ENCODE measurements at regions of chr4 and their contacts with region 1.

Region 1: GRCh38 chr4:1249148-1249730 is 309 bp upstream of the CTBP1 start:
- DNase-seq: no peak
- ATAC-seq: peak; percentile 57
- H3K4me3 ChIP-seq: peak overlapping the region; percentile 83
- H3K27ac ChIP-seq: peak overlapping the region; percentile 92
- H3K4me1 ChIP-seq: peaks cover 24% of the 10 kb centered on the region
- H3K27me3 ChIP-seq: no peaks in the 10 kb centered on the region
- CTCF ChIP-seq: no peak
- EP300 ChIP-seq: no peak
- POLR2A ChIP-seq: no peak
- RAD21 ChIP-seq: no peak

Region 2: DNA sequence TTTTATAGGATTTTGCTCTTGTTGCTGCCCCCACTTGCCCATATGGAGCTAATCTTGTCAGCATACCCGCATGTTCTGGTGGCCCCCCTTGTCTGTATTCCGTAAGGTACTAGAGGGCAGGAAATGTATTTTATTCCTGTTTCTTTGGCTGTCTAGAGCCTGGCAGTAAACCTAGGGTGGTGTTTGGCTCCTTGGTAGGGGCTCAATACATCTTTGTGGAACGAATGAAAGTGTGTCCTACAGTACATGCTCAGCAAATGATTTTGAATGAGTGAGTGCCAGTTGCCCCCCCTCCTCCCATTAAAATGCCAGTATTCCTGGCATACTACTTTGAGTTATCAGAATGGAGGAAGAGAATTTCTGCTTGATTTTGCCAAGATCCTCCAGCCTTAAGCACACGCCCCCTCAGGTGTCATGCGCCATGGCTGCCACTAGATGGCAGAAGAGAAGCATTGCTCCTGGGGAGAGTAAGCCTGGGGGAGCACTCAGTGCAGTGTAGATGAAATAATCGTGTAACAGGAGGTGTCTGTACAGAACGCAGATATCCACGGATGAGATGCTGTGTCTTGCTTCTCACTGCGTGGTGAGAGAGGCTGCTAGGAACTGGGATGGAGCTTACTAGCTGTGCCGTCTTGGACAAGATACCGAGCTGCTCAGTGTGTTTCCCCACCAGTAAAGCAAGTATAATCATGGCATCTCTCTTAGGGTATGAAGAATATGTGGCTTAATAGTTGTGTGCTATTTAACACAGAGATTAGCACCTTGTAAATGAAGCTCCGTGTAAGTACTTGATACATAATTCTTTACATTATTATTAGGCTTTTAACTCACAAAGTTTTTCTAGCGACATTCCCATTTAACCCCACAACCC is 118.7 kb before region 1 on chr4:
- CTCF ChIA-PET with region 1: interaction called, 9 read pairs
- POLR2A ChIA-PET with region 1: no interaction called
- RAD21 ChIA-PET with region 1: interaction called, 7 read pairs
- SMC1A ChIA-PET with region 1: interaction called, 4 read pairs
- in situ Hi-C with region 1: no loop called
- intact Hi-C with region 1: loop called (anchors 5 kb)
- DNase-seq: peak; percentile 57
- ATAC-seq: peak; percentile 100
- H3K4me3 ChIP-seq: no peak overlapping the region
- H3K27ac ChIP-seq: no peak overlapping the region
- H3K4me1 ChIP-seq: no peaks in the 10 kb centered on the region; the same call in 1 of the 2 replicates
- H3K27me3 ChIP-seq: no peaks in the 10 kb centered on the region
- CTCF ChIP-seq: peak; percentile 99 to 100 (median 99); a peak in 5 of 6 replicates
- EP300 ChIP-seq: no peak
- POLR2A ChIP-seq: no peak
- RAD21 ChIP-seq: peak; percentile 100

Region 3: DNA sequence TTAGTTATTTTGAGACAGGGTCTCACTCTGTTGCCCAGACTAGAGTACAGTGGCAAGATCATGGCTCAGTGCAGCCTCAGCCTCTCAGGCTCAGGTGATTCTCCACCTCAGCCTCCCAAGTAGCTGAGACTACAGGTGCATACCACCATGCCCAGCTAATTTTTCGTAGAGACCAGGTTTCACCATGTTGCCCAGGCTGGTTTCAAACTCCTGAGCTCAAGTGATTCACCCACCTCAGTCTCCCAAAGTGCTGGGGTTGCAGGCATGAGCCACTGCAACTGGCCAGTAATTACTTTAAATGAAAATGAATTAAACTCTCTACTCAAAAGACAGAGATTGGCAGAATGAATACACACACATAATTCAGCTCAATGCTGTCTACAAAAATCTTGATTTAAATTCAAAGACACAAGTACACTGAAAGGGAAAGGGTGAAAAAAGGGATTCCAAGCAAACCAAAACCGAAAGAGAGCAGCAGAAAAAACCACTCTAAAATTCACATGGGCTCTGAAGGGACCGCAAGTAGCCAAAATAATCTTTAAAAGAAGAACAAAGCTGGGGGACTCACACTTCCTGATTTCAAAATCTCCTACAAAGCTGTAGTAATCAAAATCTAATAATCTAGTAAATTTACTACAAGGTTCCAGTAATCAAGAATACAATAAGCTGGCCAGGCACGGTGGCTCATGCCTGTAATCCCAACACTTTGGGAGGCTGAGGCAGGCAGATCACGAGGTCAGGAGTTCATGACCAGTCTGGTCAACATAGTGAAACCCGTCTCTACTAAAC is 65.1 kb before region 1 on chr4:
- CTCF ChIA-PET with region 1: no interaction called
- POLR2A ChIA-PET with region 1: no interaction called
- RAD21 ChIA-PET with region 1: interaction called, 3 read pairs
- SMC1A ChIA-PET with region 1: no interaction called
- in situ Hi-C with region 1: no loop called
- intact Hi-C with region 1: loop called (anchors 5 kb)
- DNase-seq: peak; percentile 64
- ATAC-seq: peak; percentile 82
- H3K4me3 ChIP-seq: peak overlapping the region; percentile 60
- H3K27ac ChIP-seq: peak overlapping the region; percentile 57
- H3K4me1 ChIP-seq: peaks cover 27% of the 10 kb centered on the region
- H3K27me3 ChIP-seq: no peaks in the 10 kb centered on the region
- CTCF ChIP-seq: no peak
- EP300 ChIP-seq: 0 out of 4 replicates have a peak, but pooled peaks of 1 of the 2 experiments have one; percentile 39
- POLR2A ChIP-seq: no peak
- RAD21 ChIP-seq: no peak

Region 4: GRCh38 chr4:1200425-1201035 is 48.7 kb before region 1 on chr4:
- CTCF ChIA-PET with region 1: no interaction called
- POLR2A ChIA-PET with region 1: interaction called, 4 read pairs
- RAD21 ChIA-PET with region 1: interaction called, 16 read pairs
- SMC1A ChIA-PET with region 1: interaction called, 8 read pairs
- in situ Hi-C with region 1: no loop called
- intact Hi-C with region 1: loop called (anchors 5 kb)
- DNase-seq: no peak
- ATAC-seq: peak; percentile 41
- H3K4me3 ChIP-seq: peak overlapping the region; percentile 75
- H3K27ac ChIP-seq: peak overlapping the region; percentile 77
- H3K4me1 ChIP-seq: peaks cover 38% of the 10 kb centered on the region
- H3K27me3 ChIP-seq: no peaks in the 10 kb centered on the region
- CTCF ChIP-seq: no peak
- EP300 ChIP-seq: no peak
- POLR2A ChIP-seq: no peak
- RAD21 ChIP-seq: no peak

Region 5: DNA sequence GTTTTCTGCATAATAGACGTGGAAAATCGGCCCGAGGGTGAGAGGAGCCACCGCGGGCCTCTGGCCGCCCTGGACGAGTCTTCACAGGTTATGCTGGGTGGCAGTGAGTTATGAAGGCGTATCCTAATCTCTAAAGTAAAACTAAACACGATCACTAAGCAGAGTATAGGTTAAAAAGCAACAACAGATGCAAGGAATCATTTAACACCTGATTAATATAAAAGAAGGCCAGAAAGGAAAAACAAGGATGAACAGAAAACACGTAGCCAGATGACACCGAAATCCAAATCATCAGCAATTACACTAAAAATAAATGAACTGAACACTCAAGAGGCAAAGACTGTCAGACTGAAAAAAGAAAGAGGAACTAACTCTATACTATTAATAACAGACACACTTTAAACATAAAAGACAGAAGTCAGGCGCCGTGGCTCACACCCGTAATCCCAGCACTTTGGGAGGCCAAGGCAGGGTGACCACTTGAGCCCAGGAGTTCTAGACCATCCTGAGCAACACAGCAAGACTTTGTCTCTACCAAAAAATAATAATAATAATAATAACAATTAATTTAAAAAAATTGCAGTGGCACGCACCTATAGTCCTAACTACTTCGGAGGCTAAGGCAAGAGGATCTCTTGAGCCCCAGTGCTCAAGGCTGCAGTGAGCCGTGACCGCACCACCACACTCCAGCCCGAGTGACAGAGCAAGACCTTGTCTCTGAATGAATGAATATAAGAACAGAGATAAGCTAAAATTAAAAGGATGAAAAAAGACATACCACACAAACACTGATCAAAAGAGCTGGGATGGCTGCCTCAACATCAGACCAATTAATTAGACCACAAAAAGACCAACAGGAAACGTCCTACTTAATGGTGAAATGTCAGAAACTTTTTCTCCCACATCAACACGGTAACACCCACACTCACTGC is 30.3 kb before region 1 on chr4:
- CTCF ChIA-PET with region 1: no interaction called
- POLR2A ChIA-PET with region 1: interaction called, 5 read pairs
- RAD21 ChIA-PET with region 1: interaction called, 8 read pairs
- SMC1A ChIA-PET with region 1: interaction called, 5 read pairs
- in situ Hi-C with region 1: no loop called
- intact Hi-C with region 1: loop called (anchors 1 kb)
- DNase-seq: peak; percentile 92
- ATAC-seq: peak; percentile 91
- H3K4me3 ChIP-seq: peak overlapping the region; percentile 45; the same call in 1 of the 2 replicates
- H3K27ac ChIP-seq: peak overlapping the region; percentile 88
- H3K4me1 ChIP-seq: peaks cover 51% of the 10 kb centered on the region
- H3K27me3 ChIP-seq: no peaks in the 10 kb centered on the region
- CTCF ChIP-seq: no peak
- EP300 ChIP-seq: peak; percentile 87 to 88; a peak in 3 of 4 replicates
- POLR2A ChIP-seq: no peak
- RAD21 ChIP-seq: no peak

Region 6: DNA sequence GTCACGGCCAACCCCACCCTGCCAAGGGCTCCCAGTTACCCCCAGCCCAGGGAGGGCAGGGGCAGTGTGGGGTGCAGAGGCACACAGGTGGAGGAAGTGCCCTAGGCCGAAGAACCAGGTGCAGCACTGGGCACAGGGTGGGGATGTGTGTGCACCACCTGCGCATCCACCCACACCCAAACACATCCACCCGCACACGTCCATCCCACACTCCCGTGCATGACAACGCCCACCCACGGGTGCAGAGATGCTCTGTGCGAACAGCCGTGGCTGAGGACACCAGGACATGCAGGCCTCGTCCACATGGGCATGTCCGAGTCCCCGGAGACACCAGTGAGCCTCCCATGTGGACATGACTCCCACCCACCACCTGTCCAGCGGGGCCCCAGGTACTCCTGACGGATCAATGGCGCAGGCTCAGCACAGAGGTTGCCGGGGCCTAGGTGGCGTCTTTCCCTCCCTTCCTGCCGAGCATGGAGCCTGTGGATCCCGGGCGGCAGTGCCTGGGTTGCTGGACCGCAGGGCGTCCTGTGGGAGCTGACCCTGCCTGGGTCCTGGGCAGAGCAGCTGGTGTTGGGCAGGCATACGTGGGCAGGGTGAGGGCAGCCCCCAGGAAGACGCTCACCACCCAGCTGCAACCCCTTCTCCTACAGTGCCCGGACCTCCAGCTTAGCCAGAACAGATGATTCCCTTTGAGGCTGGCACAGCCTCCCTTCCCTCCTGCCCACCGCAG is 20.0 kb before region 1 on chr4:
- CTCF ChIA-PET with region 1: no interaction called
- POLR2A ChIA-PET with region 1: no interaction called
- RAD21 ChIA-PET with region 1: no interaction called
- SMC1A ChIA-PET with region 1: no interaction called
- in situ Hi-C with region 1: no loop called
- intact Hi-C with region 1: no loop called
- DNase-seq: no peak
- ATAC-seq: no peak
- H3K4me3 ChIP-seq: no peak overlapping the region
- H3K27ac ChIP-seq: no peak overlapping the region
- H3K4me1 ChIP-seq: no peaks in the 10 kb centered on the region
- H3K27me3 ChIP-seq: no peaks in the 10 kb centered on the region
- CTCF ChIP-seq: no peak
- EP300 ChIP-seq: no peak
- POLR2A ChIP-seq: peak; percentile 50; the same call in 1 of the 2 replicates
- RAD21 ChIP-seq: no peak

Region 7: DNA sequence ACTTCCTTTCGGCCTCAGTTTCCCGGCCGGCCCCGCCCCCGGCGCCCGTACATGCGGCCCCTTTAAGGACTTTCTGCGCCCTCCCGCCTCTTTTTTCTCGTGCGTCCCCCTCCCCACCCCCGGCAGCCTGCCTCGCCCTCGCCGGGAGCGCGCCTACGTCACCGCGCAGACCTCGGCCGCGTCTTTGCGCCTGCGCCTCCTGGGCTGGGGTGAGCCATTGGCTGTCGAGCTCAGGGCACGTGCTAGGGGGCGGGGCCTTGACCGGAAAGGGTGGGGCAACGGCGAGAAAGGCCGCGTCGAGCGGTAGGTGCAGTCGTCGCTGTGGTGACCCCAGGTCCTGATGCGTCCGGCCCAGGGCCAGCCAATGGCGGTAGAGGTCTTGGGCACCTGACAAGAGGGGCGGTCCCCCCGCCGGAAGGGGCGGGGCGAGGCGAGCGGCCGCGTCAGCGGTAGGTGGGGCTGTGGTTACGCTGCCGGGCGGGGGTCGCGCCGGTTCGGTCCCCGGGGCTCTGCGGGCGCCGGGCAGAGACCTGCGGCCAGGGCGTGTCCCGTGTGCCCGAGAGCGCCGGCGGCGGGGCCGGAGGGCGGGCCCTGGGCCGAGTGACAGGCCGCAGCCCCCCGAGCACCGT is 97.7 kb after region 1 on chr4 and contains the start of gene UVSSA:
- CTCF ChIA-PET with region 1: interaction called, 21 read pairs
- POLR2A ChIA-PET with region 1: interaction called, 42 read pairs
- RAD21 ChIA-PET with region 1: interaction called, 23 read pairs
- SMC1A ChIA-PET with region 1: interaction called, 11 read pairs
- in situ Hi-C with region 1: loop called (anchors 5 kb)
- intact Hi-C with region 1: loop called (anchors 1 kb)
- DNase-seq: peak; percentile 97
- ATAC-seq: peak; percentile 94
- H3K4me3 ChIP-seq: peak within 1 kb of the TSS; percentile 81
- H3K27ac ChIP-seq: peak within 1 kb of the TSS; percentile 88
- H3K4me1 ChIP-seq: peaks cover 10% of the 10 kb centered on the region
- H3K27me3 ChIP-seq: no peaks in the 10 kb centered on the region
- CTCF ChIP-seq: no peak
- EP300 ChIP-seq: no peak
- POLR2A ChIP-seq: no peak; the same call in 1 of the 2 replicates
- RAD21 ChIP-seq: no peak
- polyA plus RNA-seq, gene UVSSA: 0.34 to 0.82 TPM

Region 8: GRCh38 chr4:1351854-1352633 is 102.8 kb after region 1 on chr4:
- CTCF ChIA-PET with region 1: interaction called, 21 read pairs
- POLR2A ChIA-PET with region 1: interaction called, 42 read pairs
- RAD21 ChIA-PET with region 1: interaction called, 23 read pairs
- SMC1A ChIA-PET with region 1: interaction called, 11 read pairs
- in situ Hi-C with region 1: loop called (anchors 5 kb)
- intact Hi-C with region 1: no loop called
- DNase-seq: peak; percentile 20
- ATAC-seq: peak; percentile 71
- H3K4me3 ChIP-seq: no peak overlapping the region
- H3K27ac ChIP-seq: no peak overlapping the region
- H3K4me1 ChIP-seq: peaks cover 10% of the 10 kb centered on the region
- H3K27me3 ChIP-seq: no peaks in the 10 kb centered on the region
- CTCF ChIP-seq: peak; percentile 85 to 97 (median 91)
- EP300 ChIP-seq: no peak
- POLR2A ChIP-seq: no peak
- RAD21 ChIP-seq: peak; percentile 79

Measured in GM12878 (cell line).